WTC11 (cell line): ENCODE measurements at regions of chr1 and their contacts with region 1.

Region 1: GRCh38 chr1:22641906-22642636 is 1.4 kb upstream of the C1QC start:
- DNase-seq: peak; percentile 90
- ATAC-seq: peak; percentile 80
- H3K4me3 Mint-ChIP-seq: no peak overlapping the region
- H3K27ac Mint-ChIP-seq: no peak overlapping the region
- H3K4me1 Mint-ChIP-seq: peaks cover 5% of the 10 kb centered on the region
- H3K27me3 Mint-ChIP-seq: 0 out of 2 replicates have a peak, but pooled peaks cover 4% of the 10 kb centered on the region
- CTCF ChIP-seq: peak; percentile 82

Region 2: GRCh38 chr1:22527555-22528296 is 114.3 kb before region 1 on chr1:
- CTCF ChIA-PET with region 1: interaction called, 68 read pairs
- POLR2A ChIA-PET with region 1: interaction called, 3 read pairs
- DNase-seq: no peak
- ATAC-seq: peak; percentile 38; the same call in 1 of the 2 replicates
- H3K4me3 Mint-ChIP-seq: no peak overlapping the region
- H3K27ac Mint-ChIP-seq: no peak overlapping the region; the same call in 1 of the 2 replicates
- H3K4me1 Mint-ChIP-seq: no peaks in the 10 kb centered on the region
- H3K27me3 Mint-ChIP-seq: no peaks in the 10 kb centered on the region
- CTCF ChIP-seq: no peak

Region 3: GRCh38 chr1:22533244-22533895 is 108.7 kb before region 1 on chr1:
- CTCF ChIA-PET with region 1: interaction called, 68 read pairs
- POLR2A ChIA-PET with region 1: interaction called, 3 read pairs
- DNase-seq: no peak
- ATAC-seq: no peak
- H3K4me3 Mint-ChIP-seq: no peak overlapping the region
- H3K27ac Mint-ChIP-seq: no peak overlapping the region; the same call in 1 of the 2 replicates
- H3K4me1 Mint-ChIP-seq: no peaks in the 10 kb centered on the region
- H3K27me3 Mint-ChIP-seq: no peaks in the 10 kb centered on the region
- CTCF ChIP-seq: no peak

Region 4: DNA sequence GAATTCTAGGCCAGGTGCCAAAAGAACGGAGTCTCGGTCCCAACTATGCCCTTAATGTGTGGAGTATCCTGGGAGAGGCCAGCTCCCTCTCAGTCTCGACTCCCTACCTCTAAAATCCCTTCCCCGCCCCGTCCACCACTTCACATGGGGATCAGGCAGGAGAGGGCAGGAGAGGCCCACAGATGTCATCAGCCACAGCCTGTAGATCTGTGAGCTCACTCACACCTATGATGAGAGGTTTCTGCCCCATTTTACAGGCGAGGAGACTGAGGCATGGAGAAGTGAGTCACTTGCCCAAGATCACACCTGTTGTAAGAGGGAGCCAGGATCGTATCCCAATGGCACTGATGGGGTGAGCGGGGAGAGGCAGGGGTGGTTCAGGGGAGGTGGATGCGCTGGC is 99.2 kb before region 1 on chr1:
- CTCF ChIA-PET with region 1: interaction called, 15 read pairs
- POLR2A ChIA-PET with region 1: no interaction called
- DNase-seq: no peak
- ATAC-seq: no peak
- H3K4me3 Mint-ChIP-seq: no peak overlapping the region
- H3K27ac Mint-ChIP-seq: no peak overlapping the region
- H3K4me1 Mint-ChIP-seq: 0 out of 2 replicates have a peak, but pooled peaks cover 4% of the 10 kb centered on the region
- H3K27me3 Mint-ChIP-seq: peaks cover 8% of the 10 kb centered on the region
- CTCF ChIP-seq: no peak

Region 5: GRCh38 chr1:22557341-22557950 is 84.6 kb before region 1 on chr1:
- CTCF ChIA-PET with region 1: interaction called, 13 read pairs
- POLR2A ChIA-PET with region 1: interaction called, 4 read pairs
- DNase-seq: no peak
- ATAC-seq: no peak
- H3K4me3 Mint-ChIP-seq: no peak overlapping the region
- H3K27ac Mint-ChIP-seq: no peak overlapping the region
- H3K4me1 Mint-ChIP-seq: peaks cover 39% of the 10 kb centered on the region
- H3K27me3 Mint-ChIP-seq: peaks cover 32% of the 10 kb centered on the region
- CTCF ChIP-seq: no peak

Region 6: DNA sequence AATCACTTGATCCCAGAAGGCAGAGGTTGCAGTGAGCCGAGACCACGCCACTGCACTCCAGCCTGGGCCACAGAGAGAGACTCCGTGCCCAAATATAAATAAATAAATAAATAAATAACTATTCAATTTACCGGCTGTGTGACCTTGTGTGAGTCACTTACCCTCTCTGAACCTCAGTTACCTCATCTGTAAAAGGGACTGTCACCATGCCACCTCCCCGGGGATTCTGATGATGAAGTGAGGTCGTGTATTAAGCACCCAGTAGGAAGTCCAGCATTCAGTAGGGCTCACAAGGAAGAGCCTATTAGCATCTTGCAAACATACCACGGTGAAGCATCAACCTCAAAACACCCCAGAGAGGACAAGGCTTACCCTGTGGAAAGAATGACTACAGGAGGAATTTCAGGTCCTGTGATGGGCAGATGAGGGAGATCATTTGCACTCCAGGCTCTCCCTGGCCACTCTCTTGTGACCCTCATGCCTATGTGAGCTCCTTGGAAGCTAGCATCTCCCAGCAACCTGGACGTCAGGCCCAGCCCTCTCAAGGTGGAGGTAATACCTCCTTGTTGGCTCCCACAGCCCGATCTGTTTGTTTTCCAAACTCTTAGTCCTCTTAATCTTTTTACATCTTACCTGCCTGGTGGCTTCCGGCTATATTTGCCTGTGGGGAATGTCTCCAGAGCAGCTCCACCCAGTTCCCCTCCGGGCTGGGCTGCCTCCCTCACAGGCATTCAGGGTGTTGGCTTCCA is 13.2 kb before region 1 on chr1:
- CTCF ChIA-PET with region 1: interaction called, 12 read pairs
- POLR2A ChIA-PET with region 1: no interaction called
- DNase-seq: no peak
- ATAC-seq: peak; percentile 10
- H3K4me3 Mint-ChIP-seq: no peak overlapping the region; the same call in 1 of the 2 replicates
- H3K27ac Mint-ChIP-seq: peak overlapping the region; percentile 58; the same call in 1 of the 2 replicates
- H3K4me1 Mint-ChIP-seq: peaks cover 55% of the 10 kb centered on the region
- H3K27me3 Mint-ChIP-seq: peaks cover 3% of the 10 kb centered on the region; the same call in 1 of the 2 replicates
- CTCF ChIP-seq: no peak